Activated CD4-positive, alpha-beta T cell treated with anti-CD3 and anti-CD28 coated beads for 36 hours (primary cell): ENCODE measurements at regions of chr1 and their contacts with region 1.

Region 1: DNA sequence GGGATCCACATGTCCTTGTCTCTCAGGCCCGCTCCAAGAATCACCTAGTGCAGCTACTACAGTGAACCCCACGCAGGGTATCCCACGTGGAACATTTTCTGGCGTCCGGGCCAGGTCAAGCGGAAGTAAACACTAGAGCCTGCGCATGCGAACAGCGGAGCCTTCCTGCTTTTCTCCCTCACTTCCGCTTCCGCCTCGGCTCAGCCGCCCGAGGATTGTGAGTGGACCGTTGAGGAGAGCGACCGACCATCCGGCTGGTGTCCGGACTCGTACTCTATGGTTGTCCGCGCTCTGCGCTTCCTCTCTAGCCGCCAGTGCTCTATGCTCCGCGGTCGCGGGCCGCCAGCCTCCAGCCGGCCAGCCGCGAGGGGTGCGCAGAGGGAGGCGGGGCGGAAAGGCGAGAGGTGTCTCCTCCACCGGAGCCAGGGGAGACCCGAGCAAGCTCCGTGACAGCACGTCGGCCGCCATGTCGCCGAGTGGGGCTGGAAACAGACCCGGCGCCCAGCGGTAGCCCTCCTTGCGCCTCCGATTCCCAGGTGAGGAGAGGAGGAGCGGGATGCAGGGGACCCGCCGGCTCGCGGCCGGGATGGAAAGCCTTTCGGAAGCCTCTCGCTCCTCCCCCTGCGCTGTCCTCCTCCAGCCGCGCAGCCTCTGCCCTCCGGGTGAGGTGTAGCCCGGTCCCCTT is at the starts of genes CNST and TFB2M:
- DNase-seq: peak; percentile 96
- ATAC-seq: peak; percentile 84
- H3K4me3 Mint-ChIP-seq: peak within 1 kb of the TSS; percentile 83
- H3K27ac Mint-ChIP-seq: peak within 1 kb of the TSS; percentile 94
- H3K4me1 Mint-ChIP-seq: peaks cover 42% of the 10 kb centered on the region
- H3K27me3 Mint-ChIP-seq: no peaks in the 10 kb centered on the region
- total RNA-seq, gene CNST: 23.6 to 24.2 TPM
- total RNA-seq, gene TFB2M: 14.1 to 17.3 TPM

Region 2: GRCh38 chr1:244835276-244836134 is 1730.8 kb before region 1 on chr1 and contains the start of gene COX20:
- CTCF ChIA-PET with region 1: no interaction called
- POLR2A ChIA-PET with region 1: no interaction called
- intact Hi-C with region 1: loop called in 1 of 2 experiments (anchors 10 kb)
- DNase-seq: peak; percentile 92
- ATAC-seq: peak; percentile 60
- H3K4me3 Mint-ChIP-seq: peak within 1 kb of the TSS; percentile 80
- H3K27ac Mint-ChIP-seq: peak within 1 kb of the TSS; percentile 99
- H3K4me1 Mint-ChIP-seq: peaks cover 43% of the 10 kb centered on the region
- H3K27me3 Mint-ChIP-seq: no peaks in the 10 kb centered on the region
- total RNA-seq, gene COX20: 32.0 to 33.2 TPM

Region 3: DNA sequence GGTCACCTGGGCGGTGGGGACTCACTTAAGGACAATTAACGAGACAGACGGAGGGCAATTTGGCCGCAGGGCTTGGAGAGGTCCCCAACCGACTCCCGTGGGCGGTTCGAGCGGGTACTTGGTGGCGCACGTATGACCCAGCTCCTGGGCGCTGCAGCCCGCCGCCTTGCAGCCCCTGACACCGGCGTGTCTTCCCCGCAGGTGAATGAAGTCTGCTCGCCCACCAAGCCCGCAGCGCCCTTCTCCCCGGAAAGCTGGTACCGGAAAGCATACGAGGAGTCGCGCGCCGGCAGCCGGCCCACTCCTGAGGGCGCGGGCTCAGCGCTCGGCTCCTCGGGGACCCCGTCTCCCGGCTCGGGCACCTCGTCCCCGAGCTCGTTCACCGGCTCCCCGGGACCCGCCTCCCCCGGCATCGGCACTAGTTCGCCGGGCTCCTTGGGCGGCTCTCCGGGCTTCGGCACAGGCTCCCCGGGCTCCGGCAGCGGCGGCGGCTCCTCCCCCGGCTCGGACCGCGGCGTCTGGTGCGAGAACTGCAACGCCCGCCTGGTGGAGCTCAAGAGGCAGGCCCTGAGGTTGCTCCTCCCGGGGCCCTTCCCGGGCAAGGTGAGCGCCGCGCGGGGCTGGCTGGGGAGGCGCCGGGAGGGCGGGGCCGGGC is 1410.1 kb before region 1 on chr1:
- CTCF ChIA-PET with region 1: no interaction called
- POLR2A ChIA-PET with region 1: no interaction called
- intact Hi-C with region 1: loop called in 1 of 2 experiments (anchors 2 kb)
- DNase-seq: peak; percentile 94
- ATAC-seq: peak; percentile 93
- H3K4me3 Mint-ChIP-seq: peak overlapping the region; percentile 65
- H3K27ac Mint-ChIP-seq: no peak overlapping the region
- H3K4me1 Mint-ChIP-seq: peaks cover 25% of the 10 kb centered on the region
- H3K27me3 Mint-ChIP-seq: peaks cover 59% of the 10 kb centered on the region

Region 4: GRCh38 chr1:246199086-246199645 is 367.1 kb before region 1 on chr1:
- CTCF ChIA-PET with region 1: no interaction called
- POLR2A ChIA-PET with region 1: no interaction called
- intact Hi-C with region 1: no loop called
- DNase-seq: no peak
- ATAC-seq: no peak
- H3K4me3 Mint-ChIP-seq: no peak overlapping the region
- H3K27ac Mint-ChIP-seq: no peak overlapping the region
- H3K4me1 Mint-ChIP-seq: no peaks in the 10 kb centered on the region
- H3K27me3 Mint-ChIP-seq: no peaks in the 10 kb centered on the region

Region 5: DNA sequence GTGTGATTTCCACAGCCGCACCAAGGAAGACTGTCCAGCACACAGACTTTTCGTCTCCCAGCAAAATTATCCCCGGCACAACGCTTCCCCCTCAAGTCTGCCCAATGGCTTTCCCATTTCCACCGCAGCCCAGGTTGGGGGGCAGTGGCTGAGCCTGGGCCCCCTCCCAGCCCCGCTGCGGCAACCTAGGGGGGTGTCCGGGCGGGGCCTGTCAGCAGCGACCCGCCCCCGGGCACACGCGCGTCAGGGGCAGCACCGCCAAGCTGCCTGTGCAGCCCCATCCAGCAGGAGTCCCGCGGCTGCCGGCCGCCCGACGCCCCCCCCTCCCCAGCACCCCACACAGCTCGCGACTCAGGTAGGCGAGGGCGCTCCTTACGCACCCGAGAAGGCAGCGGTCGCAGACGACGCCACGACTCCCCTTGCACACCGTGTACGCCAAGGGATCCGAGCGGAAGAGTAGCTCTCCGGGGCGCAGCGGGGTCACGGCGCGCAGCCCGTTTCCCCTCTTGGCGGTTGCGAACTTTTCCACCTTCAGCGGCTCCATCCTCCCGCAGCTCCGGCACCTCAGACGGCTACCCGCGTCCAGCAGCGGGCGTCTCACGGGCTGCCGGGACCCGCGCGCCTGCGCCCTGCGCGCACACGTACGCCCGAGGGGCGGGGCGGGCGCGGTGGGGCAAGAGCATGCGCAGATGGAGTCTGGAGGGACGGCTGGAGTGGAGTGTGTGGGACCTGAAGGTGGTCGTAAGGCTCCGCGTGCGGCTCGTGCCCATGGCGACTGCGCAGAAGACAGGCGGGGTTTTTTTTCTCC is 59.4 kb before region 1 on chr1 and contains the start of gene SMYD3:
- CTCF ChIA-PET with region 1: interaction called, 3 read pairs
- POLR2A ChIA-PET with region 1: no interaction called
- intact Hi-C with region 1: loop called (anchors 1 to 2 kb)
- DNase-seq: peak; percentile 84
- ATAC-seq: peak; percentile 93
- H3K4me3 Mint-ChIP-seq: peak within 1 kb of the TSS; percentile 78
- H3K27ac Mint-ChIP-seq: peak within 1 kb of the TSS; percentile 89
- H3K4me1 Mint-ChIP-seq: peaks cover 26% of the 10 kb centered on the region
- H3K27me3 Mint-ChIP-seq: no peaks in the 10 kb centered on the region
- total RNA-seq, gene SMYD3: 17.2 to 18.4 TPM

Region 6: DNA sequence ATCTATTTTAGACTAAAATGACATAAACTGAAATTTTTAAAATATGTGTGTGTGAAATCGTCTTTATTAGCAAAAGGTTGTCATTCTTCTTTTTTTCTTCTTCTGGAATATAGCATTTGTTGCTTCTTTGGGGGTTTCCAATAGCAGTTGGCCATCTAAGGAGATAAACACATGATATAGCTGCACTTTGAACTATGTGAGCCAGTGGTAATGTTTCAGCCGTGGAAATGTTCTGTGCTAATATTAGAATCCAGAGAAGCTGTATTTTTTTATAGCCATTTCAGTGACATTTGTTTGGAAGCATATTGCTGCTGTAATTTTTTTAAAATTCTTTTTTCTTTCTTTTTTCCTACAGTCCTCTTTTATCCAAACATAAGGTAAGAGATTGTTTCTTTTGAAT is 75.1 kb after region 1 on chr1:
- CTCF ChIA-PET with region 1: interaction called, 4 read pairs
- POLR2A ChIA-PET with region 1: no interaction called
- intact Hi-C with region 1: loop called (anchors 5 to 10 kb)
- DNase-seq: no peak
- ATAC-seq: no peak
- H3K4me3 Mint-ChIP-seq: no peak overlapping the region
- H3K27ac Mint-ChIP-seq: no peak overlapping the region
- H3K4me1 Mint-ChIP-seq: peaks cover 3% of the 10 kb centered on the region
- H3K27me3 Mint-ChIP-seq: no peaks in the 10 kb centered on the region

Region 7: DNA sequence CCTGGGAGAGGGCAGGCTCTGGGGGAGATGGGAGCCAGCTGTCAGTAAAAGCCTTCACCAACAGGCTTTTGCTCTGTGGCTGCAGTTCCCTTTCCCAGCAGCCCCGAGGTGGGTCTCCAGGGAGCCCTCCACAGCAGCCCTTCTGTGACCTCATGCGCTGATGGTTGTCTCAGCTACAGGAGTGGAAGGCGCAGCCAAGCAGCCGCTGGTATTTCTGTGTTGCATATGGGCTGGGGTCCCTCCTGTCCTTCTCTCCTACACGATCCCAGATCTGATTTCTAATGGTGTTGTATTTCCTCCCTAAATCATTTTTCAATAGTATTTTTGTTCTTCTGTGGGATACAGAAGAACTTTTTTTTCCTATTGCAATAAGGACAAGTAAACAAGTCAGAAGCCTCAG is 115.6 kb after region 1 on chr1:
- CTCF ChIA-PET with region 1: no interaction called
- POLR2A ChIA-PET with region 1: no interaction called
- intact Hi-C with region 1: no loop called
- DNase-seq: no peak
- ATAC-seq: no peak
- H3K4me3 Mint-ChIP-seq: no peak overlapping the region
- H3K27ac Mint-ChIP-seq: no peak overlapping the region
- H3K4me1 Mint-ChIP-seq: no peaks in the 10 kb centered on the region
- H3K27me3 Mint-ChIP-seq: no peaks in the 10 kb centered on the region

Region 8: GRCh38 chr1:246931549-246932365 is 365.5 kb after region 1 on chr1 and contains the start of gene AHCTF1:
- CTCF ChIA-PET with region 1: no interaction called
- POLR2A ChIA-PET with region 1: no interaction called
- intact Hi-C with region 1: loop called (anchors 1 to 2 kb)
- DNase-seq: peak; percentile 96
- ATAC-seq: peak; percentile 94
- H3K4me3 Mint-ChIP-seq: peak within 1 kb of the TSS; percentile 97
- H3K27ac Mint-ChIP-seq: peak within 1 kb of the TSS; percentile 94
- H3K4me1 Mint-ChIP-seq: peaks cover 28% of the 10 kb centered on the region
- H3K27me3 Mint-ChIP-seq: no peaks in the 10 kb centered on the region
- total RNA-seq, gene AHCTF1: 38.8 to 54.4 TPM

Region 9: GRCh38 chr1:247210376-247211117 is 644.3 kb after region 1 on chr1:
- CTCF ChIA-PET with region 1: interaction called, 3 read pairs
- POLR2A ChIA-PET with region 1: no interaction called
- intact Hi-C with region 1: loop called in 1 of 2 experiments (anchors 1 kb)
- DNase-seq: peak; percentile 98
- ATAC-seq: peak; percentile 100
- H3K4me3 Mint-ChIP-seq: peak overlapping the region; percentile 89
- H3K27ac Mint-ChIP-seq: peak overlapping the region; percentile 91
- H3K4me1 Mint-ChIP-seq: peaks cover 60% of the 10 kb centered on the region
- H3K27me3 Mint-ChIP-seq: no peaks in the 10 kb centered on the region

Region 10: DNA sequence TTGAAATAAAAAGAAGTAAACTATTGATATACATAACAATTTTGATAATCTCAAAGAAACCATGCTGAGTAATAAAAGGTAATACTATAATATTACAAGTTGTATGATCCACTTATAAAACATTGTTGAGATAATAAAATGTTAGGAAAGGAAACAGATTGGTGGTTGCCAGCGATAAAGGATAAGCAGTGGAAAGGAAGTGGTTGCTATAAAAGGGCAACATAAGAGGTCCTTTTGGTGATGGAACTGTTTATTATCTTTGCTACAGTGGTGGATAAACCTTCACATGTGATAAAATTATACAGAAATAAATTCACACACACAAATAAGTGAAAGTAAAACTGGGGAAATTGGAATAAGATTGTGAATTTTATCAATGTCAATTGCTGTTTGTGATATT is 1135.1 kb after region 1 on chr1:
- CTCF ChIA-PET with region 1: no interaction called
- POLR2A ChIA-PET with region 1: no interaction called
- intact Hi-C with region 1: no loop called
- DNase-seq: no peak
- ATAC-seq: no peak
- H3K4me3 Mint-ChIP-seq: no peak overlapping the region
- H3K27ac Mint-ChIP-seq: no peak overlapping the region
- H3K4me1 Mint-ChIP-seq: no peaks in the 10 kb centered on the region
- H3K27me3 Mint-ChIP-seq: no peaks in the 10 kb centered on the region